SK-N-SH (cell line): ENCODE measurements at regions of chr20 and their contacts with region 1.

Region 1: DNA sequence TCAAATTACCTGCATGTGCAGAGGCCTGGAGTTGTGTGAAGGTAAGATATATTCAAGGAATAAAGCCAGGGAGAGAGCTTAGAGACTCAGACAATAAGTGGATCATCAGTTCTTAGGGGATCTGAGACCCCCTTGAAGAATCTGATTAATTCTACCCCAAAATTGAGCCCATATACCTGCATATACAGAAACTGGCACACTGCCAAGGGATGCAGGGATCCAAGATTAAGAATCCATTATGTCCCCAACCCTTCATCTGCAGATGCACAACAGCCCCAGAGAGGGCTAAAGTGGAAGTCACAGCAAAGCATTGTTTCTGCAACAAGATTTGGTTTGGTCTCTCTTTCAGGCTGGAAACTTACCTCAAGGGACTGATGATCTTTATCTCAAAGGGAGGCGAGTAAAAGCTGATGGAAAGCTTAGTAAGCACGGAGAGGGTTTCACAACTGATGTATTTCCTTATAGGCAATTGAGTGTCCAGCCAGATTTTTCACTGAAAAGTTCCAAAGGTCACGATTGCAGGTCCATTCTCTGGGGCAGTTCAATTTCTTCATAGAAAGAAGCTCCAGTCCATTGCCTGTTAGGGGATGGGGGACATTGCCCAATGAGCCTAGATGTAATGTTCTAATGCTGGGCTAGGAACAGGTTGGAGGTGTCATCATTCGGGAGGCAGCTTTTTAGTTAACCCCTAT is 20.9 kb upstream of the STK35 start:
- DNase-seq: no peak
- H3K4me3 ChIP-seq: no peak overlapping the region
- H3K27ac ChIP-seq: no peak overlapping the region
- H3K4me1 ChIP-seq: no peaks in the 10 kb centered on the region
- H3K27me3 ChIP-seq: no peaks in the 10 kb centered on the region; the same call in 1 of the 2 replicates
- CTCF ChIP-seq: no peak
- EP300 ChIP-seq: no peak
- RAD21 ChIP-seq: no peak

Region 2: GRCh38 chr20:2065099-2065498 is 15.6 kb before region 1 on chr20:
- CTCF ChIA-PET with region 1: no interaction called
- POLR2A ChIA-PET with region 1: no interaction called
- DNase-seq: no peak
- H3K4me3 ChIP-seq: no peak overlapping the region
- H3K27ac ChIP-seq: no peak overlapping the region
- H3K4me1 ChIP-seq: no peaks in the 10 kb centered on the region
- H3K27me3 ChIP-seq: no peaks in the 10 kb centered on the region; the same call in 1 of the 2 replicates
- CTCF ChIP-seq: no peak
- EP300 ChIP-seq: no peak
- RAD21 ChIP-seq: no peak

Region 3: GRCh38 chr20:2093159-2093781 is 12.6 kb after region 1 on chr20:
- CTCF ChIA-PET with region 1: interaction called, 10 read pairs
- POLR2A ChIA-PET with region 1: no interaction called
- DNase-seq: peak; percentile 36
- H3K4me3 ChIP-seq: no peak overlapping the region; a peak in 1 of 4 replicates
- H3K27ac ChIP-seq: no peak overlapping the region
- H3K4me1 ChIP-seq: no peaks in the 10 kb centered on the region
- H3K27me3 ChIP-seq: peaks cover 26% of the 10 kb centered on the region
- CTCF ChIP-seq: peak; percentile 70
- EP300 ChIP-seq: no peak
- RAD21 ChIP-seq: peak; percentile 67